ENCODE measurements at regions of chr4 and their contacts with region 1.

Region 1: DNA sequence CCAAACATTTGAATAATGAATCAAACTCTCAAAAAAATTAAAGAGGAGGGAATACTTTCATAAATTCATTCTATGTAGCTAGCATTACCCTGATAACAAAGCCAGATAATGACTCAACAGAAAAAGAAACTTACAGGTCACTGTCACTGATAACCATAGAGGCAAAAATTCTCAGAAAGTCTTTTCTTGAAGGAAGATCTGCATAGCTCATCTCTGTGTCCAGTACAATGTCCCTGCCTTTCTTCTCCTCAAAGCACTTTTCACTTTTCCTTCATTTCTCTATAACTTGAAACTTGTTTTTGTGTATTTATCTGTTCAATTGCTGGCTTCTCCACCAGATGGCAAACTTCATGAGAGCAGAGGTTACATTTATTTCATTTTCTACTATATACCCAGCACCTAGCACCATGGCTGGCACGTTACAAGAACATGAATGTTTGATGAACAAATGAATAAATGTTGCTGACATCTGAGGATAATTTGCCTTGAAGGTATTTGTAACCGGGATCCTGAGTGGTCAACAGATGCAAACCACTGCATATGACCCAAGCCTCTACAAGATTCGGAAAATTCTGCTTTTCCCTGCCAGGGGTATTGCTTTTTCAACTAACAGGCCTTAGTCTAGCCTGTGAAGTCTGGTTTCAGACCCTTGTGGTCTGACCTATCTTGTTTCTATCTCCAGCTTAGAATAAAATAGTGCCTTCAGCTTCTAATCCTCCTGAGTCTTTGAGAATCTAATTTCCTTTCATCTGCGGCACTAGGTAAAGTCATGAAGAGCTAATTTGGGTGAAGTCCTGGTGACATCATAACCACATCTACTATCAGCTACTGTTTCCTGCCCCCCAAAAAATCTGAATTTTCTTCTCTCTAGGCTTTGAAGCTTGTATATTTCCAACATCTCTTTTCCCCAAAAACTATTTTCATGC is 52.5 kb upstream of the ANTXR2 start:
- DNase-seq: peak; percentile 56
- ATAC-seq: peak; percentile 86
- H3K4me3 Mint-ChIP-seq: peak overlapping the region; percentile 30
- H3K27ac Mint-ChIP-seq: peak overlapping the region; percentile 87
- H3K4me1 Mint-ChIP-seq: peaks cover 55% of the 10 kb centered on the region
- H3K27me3 Mint-ChIP-seq: no peaks in the 10 kb centered on the region
- CTCF ChIP-seq: peak; percentile 74

Region 2: GRCh38 chr4:79723507-79723906 is 402.0 kb before region 1 on chr4:
- CTCF ChIA-PET with region 1: no interaction called
- POLR2A ChIA-PET with region 1: no interaction called
- intact Hi-C with region 1: no loop called
- DNase-seq: no peak
- ATAC-seq: no peak
- H3K4me3 Mint-ChIP-seq: no peak overlapping the region
- H3K27ac Mint-ChIP-seq: no peak overlapping the region
- H3K4me1 Mint-ChIP-seq: no peaks in the 10 kb centered on the region
- H3K27me3 Mint-ChIP-seq: no peaks in the 10 kb centered on the region
- CTCF ChIP-seq: no peak

Region 3: DNA sequence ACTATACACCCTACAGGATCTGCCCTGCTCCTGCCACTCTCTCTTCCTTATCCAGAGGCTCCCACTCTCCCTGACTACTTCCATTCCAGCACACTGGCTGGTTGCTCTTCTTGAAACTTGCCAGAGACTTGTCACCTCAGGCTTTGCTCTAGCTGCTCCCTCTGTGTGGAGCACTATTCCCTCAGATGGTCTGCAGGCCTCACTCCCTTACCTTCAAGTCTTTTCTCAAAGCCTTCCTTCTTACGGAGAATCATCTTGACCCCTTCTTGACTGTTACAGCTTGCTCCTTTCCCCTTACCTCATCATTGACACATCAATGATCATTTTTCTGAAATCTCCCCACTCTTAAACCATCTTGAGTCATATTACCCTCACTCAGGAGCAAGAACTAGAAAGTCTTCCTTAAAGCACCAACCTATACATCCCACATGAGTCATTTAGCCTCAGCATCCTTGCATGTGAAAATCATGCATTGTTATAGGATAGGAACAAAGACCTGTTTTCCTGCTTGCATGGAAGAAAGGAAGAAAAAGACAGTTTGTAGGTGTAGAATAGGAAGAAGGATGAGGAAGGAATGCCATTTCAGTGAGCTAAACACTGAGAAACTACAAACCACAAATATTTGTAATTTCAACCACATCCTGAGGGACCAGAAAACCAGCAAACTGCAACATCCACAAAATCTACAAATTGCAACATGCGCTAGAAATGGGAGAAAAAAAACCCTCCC is 108.2 kb before region 1 on chr4:
- CTCF ChIA-PET with region 1: no interaction called
- POLR2A ChIA-PET with region 1: no interaction called
- intact Hi-C with region 1: no loop called
- DNase-seq: no peak
- ATAC-seq: peak; percentile 87
- H3K4me3 Mint-ChIP-seq: no peak overlapping the region
- H3K27ac Mint-ChIP-seq: no peak overlapping the region
- H3K4me1 Mint-ChIP-seq: no peaks in the 10 kb centered on the region
- H3K27me3 Mint-ChIP-seq: no peaks in the 10 kb centered on the region
- CTCF ChIP-seq: no peak

Region 4: DNA sequence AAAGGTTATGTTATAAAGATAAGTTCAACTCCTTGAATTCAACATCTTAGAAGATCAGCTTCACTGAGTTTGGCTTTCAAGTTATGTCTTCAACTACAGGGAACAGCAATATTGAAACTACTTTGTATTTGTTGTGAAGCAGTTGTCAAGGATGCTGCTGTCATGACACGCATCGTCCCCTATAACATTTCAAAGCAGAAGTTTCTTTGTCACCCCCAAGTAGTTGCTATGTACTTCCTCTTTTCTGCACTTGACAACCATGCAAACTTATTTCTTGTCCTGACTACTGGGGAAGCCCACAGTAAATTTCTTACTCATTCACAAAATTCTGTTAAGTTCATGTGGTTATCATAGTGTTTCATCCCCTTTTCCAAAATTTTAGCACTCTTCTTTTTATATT is 66.8 kb before region 1 on chr4:
- CTCF ChIA-PET with region 1: interaction called, 7 read pairs
- POLR2A ChIA-PET with region 1: no interaction called
- intact Hi-C with region 1: loop called (anchors 5 kb)
- DNase-seq: peak; percentile 71
- ATAC-seq: peak; percentile 92
- H3K4me3 Mint-ChIP-seq: peak overlapping the region; percentile 73
- H3K27ac Mint-ChIP-seq: peak overlapping the region; percentile 94
- H3K4me1 Mint-ChIP-seq: peaks cover 42% of the 10 kb centered on the region
- H3K27me3 Mint-ChIP-seq: no peaks in the 10 kb centered on the region
- CTCF ChIP-seq: no peak

Region 5: GRCh38 chr4:80101792-80102116 is 23.8 kb before region 1 on chr4:
- CTCF ChIA-PET with region 1: interaction called, 10 read pairs
- POLR2A ChIA-PET with region 1: no interaction called
- intact Hi-C with region 1: no loop called
- DNase-seq: no peak
- ATAC-seq: no peak
- H3K4me3 Mint-ChIP-seq: no peak overlapping the region
- H3K27ac Mint-ChIP-seq: no peak overlapping the region
- H3K4me1 Mint-ChIP-seq: peaks cover 9% of the 10 kb centered on the region
- H3K27me3 Mint-ChIP-seq: no peaks in the 10 kb centered on the region
- CTCF ChIP-seq: no peak

Region 6: DNA sequence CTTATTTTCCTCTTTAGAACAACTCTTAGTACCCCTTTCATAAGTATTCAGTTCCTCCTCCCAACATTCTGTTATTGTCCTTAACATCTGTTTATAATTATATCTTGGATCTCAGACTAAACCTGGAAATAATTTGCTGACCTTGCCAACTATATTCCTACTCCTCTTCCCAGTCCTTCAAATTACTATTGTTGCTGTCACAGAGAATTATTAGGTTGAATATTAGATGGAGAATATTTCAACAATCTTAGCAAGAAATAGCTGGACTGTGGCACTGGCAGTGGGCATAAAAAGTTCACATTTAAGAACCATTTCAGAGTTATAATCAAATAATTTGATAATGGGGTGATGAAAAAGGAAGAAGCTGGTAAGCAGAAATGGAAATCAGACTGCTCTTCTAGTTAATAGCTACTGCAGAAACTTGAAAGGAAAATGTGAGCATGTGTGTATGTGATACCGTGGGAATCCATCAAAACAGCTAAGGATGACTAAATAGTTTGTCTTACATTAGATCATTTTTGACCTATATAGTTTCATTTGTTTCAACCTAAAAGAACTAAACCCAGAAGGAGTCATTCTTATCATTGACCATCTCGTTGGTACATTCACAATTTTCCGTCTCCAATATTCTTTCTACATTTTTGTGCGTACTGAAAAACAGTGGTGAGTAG is 28.5 kb after region 1 on chr4:
- CTCF ChIA-PET with region 1: interaction called, 14 read pairs
- POLR2A ChIA-PET with region 1: no interaction called
- intact Hi-C with region 1: loop called (anchors 2 kb)
- DNase-seq: no peak
- ATAC-seq: peak; percentile 89
- H3K4me3 Mint-ChIP-seq: peak overlapping the region; percentile 30
- H3K27ac Mint-ChIP-seq: peak overlapping the region; percentile 91
- H3K4me1 Mint-ChIP-seq: peaks cover 34% of the 10 kb centered on the region
- H3K27me3 Mint-ChIP-seq: no peaks in the 10 kb centered on the region
- CTCF ChIP-seq: no peak

Region 7: DNA sequence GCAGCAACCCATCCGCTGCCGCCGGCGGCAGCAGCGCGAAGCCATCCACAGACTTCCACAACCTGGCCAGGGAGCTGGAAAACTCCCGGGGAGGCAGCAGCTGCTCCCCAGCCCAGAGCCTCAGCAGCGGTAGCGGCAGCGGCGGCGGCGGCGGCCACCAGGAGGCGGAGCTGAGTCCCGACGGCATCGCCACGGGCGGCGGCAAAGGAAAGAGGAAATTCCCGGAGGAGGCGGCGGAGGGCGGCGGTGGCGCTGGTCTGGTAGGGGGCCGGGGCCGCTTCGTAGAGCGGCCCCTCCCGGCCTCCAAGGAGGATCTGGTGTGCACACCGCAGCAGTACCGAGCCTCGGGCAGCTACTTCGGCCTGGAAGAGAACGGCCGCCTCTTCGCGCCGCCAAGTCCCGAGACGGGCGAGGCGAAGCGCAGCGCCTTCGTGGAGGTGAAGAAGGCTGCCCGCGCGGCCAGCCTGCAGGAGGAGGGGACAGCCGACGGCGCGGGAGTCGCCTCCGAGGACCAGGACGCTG is 76.7 kb after region 1 on chr4:
- CTCF ChIA-PET with region 1: interaction called, 30 read pairs
- POLR2A ChIA-PET with region 1: no interaction called
- intact Hi-C with region 1: no loop called
- DNase-seq: peak; percentile 77
- ATAC-seq: peak; percentile 60
- H3K4me3 Mint-ChIP-seq: peak overlapping the region; percentile 73
- H3K27ac Mint-ChIP-seq: peak overlapping the region; percentile 70
- H3K4me1 Mint-ChIP-seq: peaks cover 26% of the 10 kb centered on the region
- H3K27me3 Mint-ChIP-seq: peaks cover 18% of the 10 kb centered on the region
- CTCF ChIP-seq: peak; percentile 77

Region 8: GRCh38 chr4:80240976-80241375 is 115.5 kb after region 1 on chr4:
- CTCF ChIA-PET with region 1: no interaction called
- POLR2A ChIA-PET with region 1: no interaction called
- intact Hi-C with region 1: no loop called
- DNase-seq: no peak
- ATAC-seq: no peak
- H3K4me3 Mint-ChIP-seq: no peak overlapping the region
- H3K27ac Mint-ChIP-seq: no peak overlapping the region
- H3K4me1 Mint-ChIP-seq: no peaks in the 10 kb centered on the region
- H3K27me3 Mint-ChIP-seq: peaks cover 3% of the 10 kb centered on the region
- CTCF ChIP-seq: no peak

Region 9: DNA sequence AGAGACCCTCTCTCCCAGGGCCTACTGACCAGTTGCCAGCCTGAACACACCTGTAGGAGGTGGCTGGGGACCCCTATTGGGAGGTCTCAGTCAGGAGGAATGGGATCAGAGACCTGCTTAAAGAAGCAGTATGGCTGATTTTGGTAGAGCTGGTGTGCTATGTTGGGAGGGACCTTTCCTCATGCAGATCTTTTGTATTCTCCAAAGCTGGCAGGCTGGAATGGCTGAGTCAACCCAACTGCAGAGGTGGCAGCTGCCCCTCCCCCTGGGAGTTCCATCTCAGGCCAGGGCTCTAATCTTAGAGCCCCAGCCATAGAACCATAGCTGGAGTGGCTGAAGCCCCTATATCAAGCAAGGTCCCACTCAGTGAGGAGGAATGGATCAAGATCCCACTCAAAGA is 625.7 kb after region 1 on chr4:
- CTCF ChIA-PET with region 1: no interaction called
- POLR2A ChIA-PET with region 1: no interaction called
- intact Hi-C with region 1: no loop called
- DNase-seq: no peak
- ATAC-seq: no peak
- H3K4me3 Mint-ChIP-seq: no peak overlapping the region
- H3K27ac Mint-ChIP-seq: no peak overlapping the region
- H3K4me1 Mint-ChIP-seq: no peaks in the 10 kb centered on the region
- H3K27me3 Mint-ChIP-seq: no peaks in the 10 kb centered on the region
- CTCF ChIP-seq: no peak